ENCODE measurements at regions of chr22 and their contacts with region 1.

Region 1: GRCh38 chr22:23893943-23894709 is at the start of gene MIF:
- DNase-seq: peak; percentile 99
- ATAC-seq: peak; percentile 83
- H3K4me3 Mint-ChIP-seq: peak within 1 kb of the TSS; percentile 92
- H3K27ac Mint-ChIP-seq: peak within 1 kb of the TSS; percentile 99
- H3K4me1 Mint-ChIP-seq: peaks cover 50% of the 10 kb centered on the region
- H3K27me3 Mint-ChIP-seq: peaks cover 19% of the 10 kb centered on the region
- CTCF ChIP-seq: peak; percentile 83
- total RNA-seq, gene MIF: 1,424 to 1,978 TPM (median 1,885 TPM) in 3 replicates

Region 2: GRCh38 chr22:23767673-23768548 is 126.2 kb before region 1 on chr22 and contains the start of gene CHCHD10:
- CTCF ChIA-PET with region 1: interaction called, 11 read pairs
- POLR2A ChIA-PET with region 1: no interaction called
- DNase-seq: peak; percentile 90
- ATAC-seq: peak; percentile 41
- H3K4me3 Mint-ChIP-seq: peak within 1 kb of the TSS; percentile 89
- H3K27ac Mint-ChIP-seq: no peak within 1 kb of the TSS
- H3K4me1 Mint-ChIP-seq: peaks cover 36% of the 10 kb centered on the region
- H3K27me3 Mint-ChIP-seq: peaks cover 16% of the 10 kb centered on the region
- CTCF ChIP-seq: peak; percentile 81
- total RNA-seq, gene CHCHD10: 170 to 198 TPM (median 171 TPM) in 3 replicates

Region 3: GRCh38 chr22:23857606-23858483 is 36.3 kb before region 1 on chr22 and contains the start of gene SLC2A11:
- CTCF ChIA-PET with region 1: interaction called, 45 read pairs
- POLR2A ChIA-PET with region 1: interaction called, 27 read pairs
- DNase-seq: peak; percentile 97
- ATAC-seq: peak; percentile 87
- H3K4me3 Mint-ChIP-seq: peak within 1 kb of the TSS; percentile 79
- H3K27ac Mint-ChIP-seq: peak within 1 kb of the TSS; percentile 95
- H3K4me1 Mint-ChIP-seq: peaks cover 26% of the 10 kb centered on the region
- H3K27me3 Mint-ChIP-seq: no peaks in the 10 kb centered on the region; the same call in 1 of the 2 replicates
- CTCF ChIP-seq: no peak
- total RNA-seq, gene SLC2A11: 17.2 to 21.1 TPM (median 19.9 TPM) in 3 replicates

Region 4: DNA sequence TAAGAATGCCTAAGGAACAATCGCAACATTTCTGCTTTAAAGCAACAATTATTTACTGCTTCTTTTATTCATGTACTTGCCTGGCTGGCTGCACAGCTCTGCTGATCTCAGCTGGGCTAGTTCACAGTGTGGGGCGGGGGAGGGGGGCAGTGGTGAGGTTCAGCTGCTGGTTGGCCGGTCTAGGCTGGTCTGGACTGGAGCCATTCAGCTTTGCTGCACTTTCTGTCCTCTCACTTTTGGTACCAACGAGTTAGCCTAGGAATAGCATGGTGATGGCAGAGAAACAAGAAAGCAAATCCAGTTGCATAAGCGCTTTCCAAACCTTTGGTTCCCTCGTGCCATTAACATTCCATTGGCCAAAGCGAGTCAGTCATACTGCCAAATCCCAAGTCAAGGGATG is 15.9 kb before region 1 on chr22:
- CTCF ChIA-PET with region 1: interaction called, 11 read pairs
- POLR2A ChIA-PET with region 1: no interaction called
- DNase-seq: no peak
- ATAC-seq: no peak
- H3K4me3 Mint-ChIP-seq: no peak overlapping the region
- H3K27ac Mint-ChIP-seq: no peak overlapping the region
- H3K4me1 Mint-ChIP-seq: no peaks in the 10 kb centered on the region; the same call in 1 of the 2 replicates
- H3K27me3 Mint-ChIP-seq: no peaks in the 10 kb centered on the region
- CTCF ChIP-seq: no peak

Region 5: DNA sequence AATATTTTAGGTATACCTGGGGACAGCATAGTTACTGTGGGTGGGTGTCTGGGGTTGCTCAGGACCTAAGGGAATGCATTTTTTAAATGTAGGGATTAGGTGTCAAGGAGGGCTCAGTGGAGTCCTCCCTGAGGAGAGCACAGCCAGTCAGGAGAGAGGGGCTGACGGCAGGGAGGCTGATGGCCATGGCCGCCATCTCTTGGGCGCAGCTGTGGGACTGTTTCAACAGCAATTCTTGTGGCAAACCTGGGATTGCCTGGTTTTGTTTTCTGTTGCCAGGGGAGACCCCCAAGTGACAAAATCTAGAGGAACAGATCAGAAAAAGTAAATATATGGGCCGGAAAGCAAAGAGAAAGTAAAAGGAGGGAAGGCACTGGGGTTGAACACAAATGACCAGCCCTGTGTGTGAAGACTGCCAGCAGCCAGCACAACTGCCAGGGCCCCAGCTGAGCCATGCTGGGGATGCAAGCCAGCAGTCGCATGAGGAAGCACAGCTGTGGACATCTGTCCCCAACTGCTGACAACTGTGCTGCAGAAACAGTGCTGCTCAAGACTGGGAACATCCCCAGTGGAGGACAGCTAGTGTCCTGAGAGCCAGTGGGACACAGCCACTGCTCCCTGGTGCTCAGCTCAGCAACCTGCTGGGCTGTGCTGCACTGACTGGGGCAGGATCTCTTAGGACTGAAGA is 10.6 kb after region 1 on chr22:
- CTCF ChIA-PET with region 1: interaction called, 17 read pairs
- POLR2A ChIA-PET with region 1: no interaction called
- DNase-seq: no peak
- ATAC-seq: no peak
- H3K4me3 Mint-ChIP-seq: no peak overlapping the region
- H3K27ac Mint-ChIP-seq: no peak overlapping the region
- H3K4me1 Mint-ChIP-seq: peaks cover 36% of the 10 kb centered on the region
- H3K27me3 Mint-ChIP-seq: peaks cover 63% of the 10 kb centered on the region
- CTCF ChIP-seq: no peak

Region 6: GRCh38 chr22:23913661-23914353 is 19.7 kb after region 1 on chr22:
- CTCF ChIA-PET with region 1: interaction called, 17 read pairs
- POLR2A ChIA-PET with region 1: interaction called, 13 read pairs
- DNase-seq: peak; percentile 99
- ATAC-seq: peak; percentile 99
- H3K4me3 Mint-ChIP-seq: peak overlapping the region; percentile 76
- H3K27ac Mint-ChIP-seq: peak overlapping the region; percentile 94
- H3K4me1 Mint-ChIP-seq: peaks cover 23% of the 10 kb centered on the region
- H3K27me3 Mint-ChIP-seq: peaks cover 43% of the 10 kb centered on the region
- CTCF ChIP-seq: no peak

Region 7: GRCh38 chr22:23925020-23925606 is 31.0 kb after region 1 on chr22:
- CTCF ChIA-PET with region 1: interaction called, 12 read pairs
- POLR2A ChIA-PET with region 1: no interaction called
- DNase-seq: no peak
- ATAC-seq: no peak
- H3K4me3 Mint-ChIP-seq: no peak overlapping the region
- H3K27ac Mint-ChIP-seq: no peak overlapping the region
- H3K4me1 Mint-ChIP-seq: no peaks in the 10 kb centered on the region
- H3K27me3 Mint-ChIP-seq: peaks cover 34% of the 10 kb centered on the region
- CTCF ChIP-seq: no peak